Dorsolateral prefrontal cortex (tissue), 120 donors: ENCODE measurements at regions of chr2 and their contacts with region 1.

Region 1: GRCh38 chr2:47767880-47768609 is 14.9 kb upstream of the MSH6 start:
- DNase-seq: peak; percentile 54 to 87 (median 72)
- H3K4me3 ChIP-seq: peak overlapping the region in 36 of 59 donors; percentile 4 to 51 (median 32)
- H3K27ac ChIP-seq: peak overlapping the region in 9 of 59 donors; percentile 22 to 75 (median 32)
- H3K27me3 ChIP-seq: peaks cover 0 to 2% (median 0%) of the 10 kb centered on the region in 45 donors
- CTCF ChIP-seq: peak in 55 of 56 donors; percentile 80 to 100 (median 100)

Region 2: GRCh38 chr2:47339745-47340541 is 428.1 kb before region 1 on chr2:
- intact Hi-C with region 1: loop called (anchors 10 kb)
- DNase-seq: no peak
- H3K4me3 ChIP-seq: no peak overlapping the region
- H3K27ac ChIP-seq: no peak overlapping the region
- H3K27me3 ChIP-seq: no peaks in the 10 kb centered on the region
- CTCF ChIP-seq: no peak

Region 3: GRCh38 chr2:47437287-47437686 is 330.8 kb before region 1 on chr2:
- intact Hi-C with region 1: loop called (anchors 2 kb)
- DNase-seq: peak in 1 of 10 donors; percentile 18
- H3K4me3 ChIP-seq: peak overlapping the region in 17 of 59 donors; percentile 1 to 36 (median 18)
- H3K27ac ChIP-seq: peak overlapping the region in 1 of 59 donors; percentile 12
- H3K27me3 ChIP-seq: no peaks in the 10 kb centered on the region
- CTCF ChIP-seq: peak; percentile 13 to 88 (median 67)